ENCODE measurements at regions of chr17 and their contacts with region 1.

Region 1: DNA sequence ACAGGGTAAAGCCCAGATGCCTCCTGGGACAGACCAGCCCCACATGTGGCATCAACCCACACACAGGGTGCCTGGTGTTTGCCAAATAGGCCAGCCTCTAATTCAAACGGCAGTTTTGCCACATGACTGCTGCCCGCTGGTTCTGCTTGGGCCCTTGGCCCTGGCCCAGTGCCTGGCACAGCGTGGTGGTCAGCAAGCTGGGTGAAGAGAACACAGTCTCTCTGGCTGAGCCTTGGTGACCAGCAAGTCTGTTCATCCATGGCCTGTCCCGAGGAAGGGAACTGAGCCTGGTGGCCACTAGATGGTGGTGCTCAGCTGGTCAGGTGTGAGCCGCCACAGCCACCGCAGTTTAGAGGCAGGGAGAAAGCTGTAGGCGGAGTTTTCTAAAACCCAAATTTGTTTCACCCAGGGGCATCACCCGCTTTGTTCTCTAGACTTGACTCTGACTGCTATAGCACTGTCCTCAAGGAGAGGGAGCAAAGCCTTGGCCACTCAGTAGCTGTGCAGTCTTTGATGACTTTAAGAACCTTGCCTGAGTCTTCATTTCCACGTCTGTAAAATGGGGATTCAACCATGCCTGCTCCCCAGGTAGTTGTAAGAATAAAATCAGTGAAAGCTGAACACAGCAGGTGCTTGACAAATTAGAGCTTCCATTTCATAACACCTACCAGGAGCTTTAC is 4.7 kb upstream of the GFAP start:
- DNase-seq: peak; percentile 87
- H3K4me3 ChIP-seq: no peak overlapping the region
- H3K27ac ChIP-seq: no peak overlapping the region
- H3K4me1 ChIP-seq: peaks cover 12% of the 10 kb centered on the region
- H3K27me3 ChIP-seq: no peaks in the 10 kb centered on the region
- CTCF ChIP-seq: peak; percentile 74 to 84 (median 78)
- POLR2A ChIP-seq: no peak

Region 2: DNA sequence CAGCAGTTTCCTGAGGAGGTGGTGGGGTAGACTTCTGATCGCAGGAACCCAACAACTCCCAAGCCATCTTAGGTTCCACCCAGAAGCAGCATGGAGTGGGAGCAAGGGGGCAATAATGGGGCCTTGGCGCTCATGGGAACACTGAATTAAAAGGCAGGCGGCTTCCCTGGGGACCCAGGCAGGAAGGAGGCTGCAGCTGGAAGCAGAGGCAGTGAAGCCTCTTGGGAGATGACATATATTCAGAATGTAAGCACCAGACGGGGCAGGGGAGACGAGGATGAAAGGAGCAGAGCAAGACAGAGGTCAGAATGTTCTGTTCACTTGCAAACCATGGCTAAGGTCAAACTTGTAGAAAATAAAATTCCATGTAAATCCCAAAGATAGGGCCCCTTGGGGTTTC is 69.4 kb before region 1 on chr17:
- intact Hi-C with region 1: no loop called
- DNase-seq: no peak
- H3K4me3 ChIP-seq: no peak overlapping the region
- H3K27ac ChIP-seq: no peak overlapping the region
- H3K4me1 ChIP-seq: no peaks in the 10 kb centered on the region
- H3K27me3 ChIP-seq: no peaks in the 10 kb centered on the region
- CTCF ChIP-seq: no peak
- POLR2A ChIP-seq: no peak

Region 3: DNA sequence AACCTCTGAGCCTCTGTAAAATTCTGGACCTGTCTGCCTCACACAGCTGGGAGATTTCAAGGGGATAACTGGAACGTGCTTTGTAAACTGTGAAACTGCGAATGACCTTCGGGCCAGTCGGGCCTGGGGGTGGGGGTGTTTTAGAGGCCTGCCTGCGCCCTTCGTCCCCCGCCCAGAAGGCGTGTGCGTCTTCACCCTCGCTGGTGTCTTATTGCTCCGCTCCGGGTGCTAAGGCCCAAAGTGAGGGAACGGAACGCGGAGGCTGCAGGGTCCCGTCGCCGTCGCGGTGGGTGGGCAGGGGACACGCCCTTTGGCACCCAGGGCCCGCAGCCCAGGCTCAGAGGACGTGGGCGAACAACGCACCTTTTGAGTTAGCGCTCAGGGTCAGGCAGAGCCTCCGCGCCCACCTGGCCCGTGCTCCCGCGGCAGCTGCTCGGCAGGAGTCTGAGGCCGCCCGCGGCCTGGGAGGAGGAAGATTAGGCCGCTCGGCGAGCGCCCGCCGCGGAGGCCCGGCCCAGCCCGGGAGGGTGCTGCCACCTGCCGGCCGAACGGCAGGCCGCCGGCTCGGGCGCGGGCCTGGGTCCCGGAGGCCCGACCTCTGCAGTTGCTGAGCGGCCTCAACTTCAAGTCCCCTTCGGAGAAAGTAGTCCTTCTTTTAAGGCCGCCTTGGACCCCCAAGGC is 101.7 kb after region 1 on chr17:
- intact Hi-C with region 1: loop called (anchors 5 kb)
- DNase-seq: peak; percentile 60
- H3K4me3 ChIP-seq: peak overlapping the region; percentile 39 to 44
- H3K27ac ChIP-seq: peak overlapping the region; percentile 55 to 79
- H3K4me1 ChIP-seq: peaks cover 34% of the 10 kb centered on the region
- H3K27me3 ChIP-seq: no peaks in the 10 kb centered on the region
- CTCF ChIP-seq: peak; percentile 85 to 93 (median 88)
- POLR2A ChIP-seq: no peak